Heart left ventricle (tissue), 16 donors: ENCODE measurements at regions of chr3 and their contacts with region 1.

Region 1: GRCh38 chr3:10164546-10165393 is at the start of gene IRAK2:
- DNase-seq: peak; percentile 76 to 88 (median 80)
- ATAC-seq: peak; percentile 67 to 97 (median 94)
- H3K4me3 ChIP-seq: peak within 1 kb of the TSS; percentile 76 to 98 (median 88)
- H3K27ac ChIP-seq: peak within 1 kb of the TSS in 8 of 12 donors; percentile 43 to 85 (median 75)
- H3K4me1 ChIP-seq: peaks cover 0 to 16% (median 0%) of the 10 kb centered on the region in 12 donors
- H3K27me3 ChIP-seq: no peaks in the 10 kb centered on the region
- CTCF ChIP-seq: peak; percentile 87 to 99 (median 96)
- POLR2A ChIP-seq: peak in 1 of 2 donors; percentile 52
- total RNA-seq, gene IRAK2: 0.70 to 6.3 (median 1.5) TPM

Region 2: DNA sequence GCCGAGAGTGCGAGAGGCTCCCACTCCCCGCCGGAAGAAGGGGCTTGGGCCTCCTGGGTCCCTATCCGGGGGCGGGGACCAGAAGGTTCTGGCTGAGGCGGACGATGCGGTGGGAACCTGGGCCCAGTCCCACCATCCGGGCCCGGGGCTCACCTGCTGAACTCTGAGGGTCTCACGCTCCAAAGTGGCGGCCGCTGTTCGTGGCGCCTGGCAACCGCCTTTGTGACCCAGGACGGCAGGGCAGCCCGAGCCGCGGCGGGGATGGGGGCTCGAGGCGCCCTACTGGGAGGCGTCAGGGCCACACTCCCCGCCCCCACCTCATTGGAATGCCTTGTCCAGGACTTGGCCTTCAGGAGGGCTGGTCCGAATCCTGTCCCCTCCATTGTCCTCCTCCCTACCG is 56.7 kb before region 1 on chr3 and contains the start of gene FANCD2OS:
- intact Hi-C with region 1: no loop called
- DNase-seq: no peak
- ATAC-seq: no peak
- H3K4me3 ChIP-seq: no peak within 1 kb of the TSS
- H3K27ac ChIP-seq: no peak within 1 kb of the TSS
- H3K4me1 ChIP-seq: no peaks in the 10 kb centered on the region
- H3K27me3 ChIP-seq: peaks cover 0 to 9% (median 0%) of the 10 kb centered on the region in 9 donors
- CTCF ChIP-seq: no peak
- POLR2A ChIP-seq: no peak
- total RNA-seq, gene FANCD2OS: not detected

Region 3: GRCh38 chr3:10219737-10220136 is 55.0 kb after region 1 on chr3:
- intact Hi-C with region 1: loop called in 8 of 10 experiments (anchors 2 to 10 kb)
- DNase-seq: no peak
- ATAC-seq: no peak
- H3K4me3 ChIP-seq: no peak overlapping the region
- H3K27ac ChIP-seq: no peak overlapping the region
- H3K4me1 ChIP-seq: peaks cover 0 to 33% (median under 1%) of the 10 kb centered on the region in 12 donors
- H3K27me3 ChIP-seq: no peaks in the 10 kb centered on the region
- CTCF ChIP-seq: no peak
- POLR2A ChIP-seq: no peak

Region 4: DNA sequence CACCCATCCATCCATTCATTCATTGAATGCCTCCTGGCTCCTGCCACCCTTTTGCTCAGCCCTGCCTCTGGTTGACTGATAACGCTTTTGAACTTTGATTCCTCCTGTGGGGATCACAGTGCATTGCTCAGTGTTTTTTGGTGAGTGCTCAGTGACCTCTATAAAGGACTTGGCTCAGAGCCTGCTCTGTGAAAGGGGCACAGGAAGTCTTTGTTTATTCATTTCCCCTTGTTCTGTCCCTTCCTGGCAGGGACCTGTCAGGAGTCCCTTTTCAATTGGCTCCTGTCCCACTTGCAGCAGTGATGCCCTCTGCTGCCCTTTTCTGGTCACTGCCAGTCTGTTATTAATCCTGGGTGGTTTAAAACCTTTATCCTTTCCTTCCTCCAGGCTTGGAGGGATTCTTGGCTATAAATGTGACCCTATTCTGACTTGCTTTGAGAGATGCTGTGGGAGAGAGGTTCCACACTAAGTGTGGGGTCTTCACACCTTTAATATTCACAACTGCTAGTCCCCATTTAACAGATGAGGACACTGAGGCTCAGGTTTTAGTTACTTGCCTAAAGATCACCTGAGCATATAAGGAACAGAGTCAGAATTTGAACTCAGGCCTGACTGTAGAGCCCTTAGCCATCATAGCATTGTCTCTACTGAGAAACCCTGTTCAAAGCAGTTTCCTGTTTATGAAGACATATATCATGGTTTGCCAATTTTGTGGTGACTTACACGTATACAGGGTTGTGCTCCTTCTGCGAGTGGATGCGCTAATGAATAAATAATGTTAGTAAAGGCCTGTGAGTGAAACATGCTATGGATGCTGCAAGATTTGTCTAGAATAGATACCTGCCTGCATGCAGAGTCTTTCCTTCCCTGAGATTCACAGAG is 60.3 kb after region 1 on chr3:
- intact Hi-C with region 1: loop called in 8 of 10 experiments (anchors 2 to 10 kb)
- DNase-seq: peak; percentile 68 to 75 (median 70)
- ATAC-seq: peak; percentile 58 to 94 (median 91)
- H3K4me3 ChIP-seq: no peak overlapping the region
- H3K27ac ChIP-seq: peak overlapping the region in 1 of 12 donors; percentile 18
- H3K4me1 ChIP-seq: peaks cover 0 to 56% (median 4%) of the 10 kb centered on the region in 12 donors
- H3K27me3 ChIP-seq: no peaks in the 10 kb centered on the region
- CTCF ChIP-seq: peak; percentile 69 to 88 (median 84)
- POLR2A ChIP-seq: no peak